ENCODE measurements at regions of chr3 and their contacts with region 1.

Region 1: DNA sequence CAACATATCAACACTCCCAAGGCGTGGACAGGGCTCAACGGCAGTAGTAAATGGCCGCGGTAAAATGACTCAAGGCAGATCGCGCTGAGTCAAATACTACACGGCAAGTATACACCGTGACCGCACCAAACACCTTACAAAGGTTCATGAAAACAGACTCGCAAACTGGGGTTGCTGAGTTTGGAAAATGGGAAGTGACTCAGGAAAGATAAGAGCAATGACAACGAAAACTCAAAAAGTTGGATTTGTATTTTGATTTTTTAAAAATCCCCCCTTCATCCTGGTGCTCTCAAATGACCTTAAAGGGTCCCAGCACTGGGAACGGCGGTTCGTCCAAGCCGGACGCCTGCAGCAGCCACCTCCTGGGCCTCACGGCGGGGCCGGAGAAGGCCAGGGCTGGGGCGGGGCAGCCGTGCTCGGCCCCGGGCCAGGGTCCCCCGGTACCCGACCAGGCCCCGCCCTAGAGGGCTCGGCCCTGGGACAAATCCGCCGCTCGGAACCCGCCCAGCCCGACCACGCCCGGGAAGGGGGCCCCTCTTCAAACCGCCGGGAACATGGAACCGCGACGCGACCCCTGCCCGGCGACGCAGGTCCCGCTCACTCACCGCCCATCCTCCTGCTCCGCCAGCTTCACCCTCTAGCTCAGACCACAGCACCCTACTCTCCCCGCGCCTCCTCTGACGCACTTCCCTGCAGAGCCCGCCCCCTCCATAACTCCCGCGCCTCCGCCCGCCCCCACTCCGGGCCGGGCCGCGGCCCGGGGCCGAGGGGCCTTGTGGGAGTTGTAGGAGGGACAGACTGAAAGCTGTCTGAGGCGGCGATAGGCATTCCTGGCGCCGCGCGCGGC is at the start of gene CLDND1:
- DNase-seq: peak; percentile 97
- ATAC-seq: peak; percentile 96
- H3K4me3 Mint-ChIP-seq: peak within 1 kb of the TSS; percentile 89
- H3K27ac Mint-ChIP-seq: peak within 1 kb of the TSS; percentile 95
- H3K4me1 Mint-ChIP-seq: peaks cover 62% of the 10 kb centered on the region
- H3K27me3 Mint-ChIP-seq: no peaks in the 10 kb centered on the region
- CTCF ChIP-seq: no peak
- total RNA-seq, gene CLDND1: 190 to 198 TPM

Region 2: DNA sequence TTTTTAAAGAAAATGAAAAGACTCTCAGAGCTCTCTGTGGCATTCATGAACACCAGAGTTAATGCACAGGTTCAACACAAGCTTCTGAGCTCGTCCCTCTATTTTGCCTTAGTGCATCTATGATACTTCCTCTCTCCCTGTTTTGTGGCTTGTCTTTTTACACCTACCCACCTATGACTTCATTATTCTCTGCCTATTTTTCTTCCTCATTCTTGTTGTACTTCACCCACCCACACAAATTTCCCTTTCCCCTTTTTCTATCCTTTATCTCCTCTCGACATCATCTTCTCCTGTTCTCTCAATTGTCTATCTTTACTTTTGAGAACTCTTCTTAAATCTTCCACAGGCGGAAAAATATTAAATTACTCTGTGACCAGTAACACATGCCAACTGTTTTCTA is 307.4 kb before region 1 on chr3:
- CTCF ChIA-PET with region 1: no interaction called
- POLR2A ChIA-PET with region 1: no interaction called
- intact Hi-C with region 1: no loop called
- DNase-seq: no peak
- ATAC-seq: no peak
- H3K4me3 Mint-ChIP-seq: no peak overlapping the region
- H3K27ac Mint-ChIP-seq: no peak overlapping the region
- H3K4me1 Mint-ChIP-seq: no peaks in the 10 kb centered on the region
- H3K27me3 Mint-ChIP-seq: peaks cover 2% of the 10 kb centered on the region
- CTCF ChIP-seq: no peak

Region 3: GRCh38 chr3:98563661-98564281 is 41.3 kb after region 1 on chr3:
- CTCF ChIA-PET with region 1: interaction called, 9 read pairs
- POLR2A ChIA-PET with region 1: interaction called, 25 read pairs
- intact Hi-C with region 1: no loop called
- DNase-seq: peak; percentile 32
- ATAC-seq: peak; percentile 16
- H3K4me3 Mint-ChIP-seq: no peak overlapping the region
- H3K27ac Mint-ChIP-seq: peak overlapping the region; percentile 94
- H3K4me1 Mint-ChIP-seq: peaks cover 84% of the 10 kb centered on the region
- H3K27me3 Mint-ChIP-seq: no peaks in the 10 kb centered on the region
- CTCF ChIP-seq: no peak

Measured in activated CD8-positive, alpha-beta T cell treated with anti-CD3 and anti-CD28 coated beads for 36 hours (primary cell).